Naive thymus-derived CD4-positive, alpha-beta T cell (primary cell): ENCODE measurements at regions of chr6 and their contacts with region 1.

Region 1: GRCh38 chr6:31139599-31139998 is 733 bp upstream of the PSORS1C2 start:
- DNase-seq: no peak
- ATAC-seq: no peak
- H3K4me3 ChIP-seq: no peak overlapping the region
- H3K4me3 Mint-ChIP-seq: peak overlapping the region in 1 of 10 donors; percentile 11
- H3K27ac ChIP-seq: no peak overlapping the region
- H3K27ac Mint-ChIP-seq: no peak overlapping the region
- H3K4me1 ChIP-seq: peaks cover 0 to 5% of the 10 kb centered on the region in 2 donors
- H3K4me1 Mint-ChIP-seq: peaks cover 4 to 8% (median 7%) of the 10 kb centered on the region in 7 donors
- H3K27me3 ChIP-seq: no peaks in the 10 kb centered on the region
- H3K27me3 Mint-ChIP-seq: peaks cover 0 to 3% (median 0%) of the 10 kb centered on the region in 5 donors

Region 2: GRCh38 chr6:31114970-31115849 is 24.4 kb before region 1 on chr6:
- CTCF ChIA-PET with region 1: no interaction called
- POLR2A ChIA-PET with region 1: no interaction called
- intact Hi-C with region 1: no loop called
- DNase-seq: peak in 3 of 9 donors; percentile 23 to 45 (median 23)
- ATAC-seq: no peak
- H3K4me3 ChIP-seq: no peak overlapping the region
- H3K4me3 Mint-ChIP-seq: peak overlapping the region in 2 of 10 donors; percentile 28 to 46
- H3K27ac ChIP-seq: no peak overlapping the region
- H3K27ac Mint-ChIP-seq: peak overlapping the region in 2 of 9 donors; percentile 32 to 76
- H3K4me1 ChIP-seq: no peaks in the 10 kb centered on the region
- H3K4me1 Mint-ChIP-seq: peaks cover 0 to 12% (median 5%) of the 10 kb centered on the region in 7 donors
- H3K27me3 ChIP-seq: no peaks in the 10 kb centered on the region
- H3K27me3 Mint-ChIP-seq: peaks cover 0 to 24% (median 9%) of the 10 kb centered on the region in 5 donors

Region 3: GRCh38 chr6:31128093-31128676 is 11.4 kb before region 1 on chr6:
- CTCF ChIA-PET with region 1: interaction called, 8 read pairs
- POLR2A ChIA-PET with region 1: interaction called, 3 read pairs
- intact Hi-C with region 1: loop called in 1 of 2 experiments (anchors 1 kb)
- DNase-seq: peak; percentile 29 to 79 (median 55)
- ATAC-seq: peak; percentile 87
- H3K4me3 ChIP-seq: no peak overlapping the region
- H3K4me3 Mint-ChIP-seq: no peak overlapping the region
- H3K27ac ChIP-seq: no peak overlapping the region
- H3K27ac Mint-ChIP-seq: peak overlapping the region in 2 of 9 donors; percentile 0 to 1
- H3K4me1 ChIP-seq: no peaks in the 10 kb centered on the region
- H3K4me1 Mint-ChIP-seq: peaks cover 5 to 8% (median 6%) of the 10 kb centered on the region in 7 donors
- H3K27me3 ChIP-seq: no peaks in the 10 kb centered on the region
- H3K27me3 Mint-ChIP-seq: peaks cover 0 to 17% (median 5%) of the 10 kb centered on the region in 5 donors

Region 4: DNA sequence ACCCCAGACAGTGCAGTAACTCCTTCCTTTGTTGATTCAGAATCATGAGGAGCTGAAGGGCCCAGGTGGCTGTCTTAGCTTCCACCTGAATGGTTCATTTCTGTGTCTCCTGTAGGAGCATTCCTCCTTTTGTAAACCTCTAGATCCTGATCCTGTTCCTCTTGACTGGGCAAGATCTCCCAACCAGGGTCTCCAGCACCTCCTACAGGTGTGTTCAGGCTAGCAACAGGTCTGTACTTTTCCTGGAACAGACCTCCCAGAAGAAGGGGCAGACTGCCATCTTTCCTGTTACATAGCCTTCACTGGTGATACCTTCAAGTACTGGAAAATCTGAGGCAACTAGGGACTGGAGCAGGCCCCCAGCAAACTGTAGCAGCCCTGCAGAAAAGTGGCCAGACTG is 182.2 kb after region 1 on chr6:
- CTCF ChIA-PET with region 1: no interaction called
- POLR2A ChIA-PET with region 1: no interaction called
- intact Hi-C with region 1: loop called in 1 of 2 experiments (anchors 2 kb)
- DNase-seq: no peak
- ATAC-seq: no peak
- H3K4me3 ChIP-seq: no peak overlapping the region
- H3K4me3 Mint-ChIP-seq: no peak overlapping the region
- H3K27ac ChIP-seq: no peak overlapping the region
- H3K27ac Mint-ChIP-seq: peak overlapping the region in 1 of 9 donors; percentile 37
- H3K4me1 ChIP-seq: no peaks in the 10 kb centered on the region
- H3K4me1 Mint-ChIP-seq: no peaks in the 10 kb centered on the region
- H3K27me3 ChIP-seq: no peaks in the 10 kb centered on the region
- H3K27me3 Mint-ChIP-seq: peaks cover 5 to 61% (median 38%) of the 10 kb centered on the region in 5 donors

Region 5: DNA sequence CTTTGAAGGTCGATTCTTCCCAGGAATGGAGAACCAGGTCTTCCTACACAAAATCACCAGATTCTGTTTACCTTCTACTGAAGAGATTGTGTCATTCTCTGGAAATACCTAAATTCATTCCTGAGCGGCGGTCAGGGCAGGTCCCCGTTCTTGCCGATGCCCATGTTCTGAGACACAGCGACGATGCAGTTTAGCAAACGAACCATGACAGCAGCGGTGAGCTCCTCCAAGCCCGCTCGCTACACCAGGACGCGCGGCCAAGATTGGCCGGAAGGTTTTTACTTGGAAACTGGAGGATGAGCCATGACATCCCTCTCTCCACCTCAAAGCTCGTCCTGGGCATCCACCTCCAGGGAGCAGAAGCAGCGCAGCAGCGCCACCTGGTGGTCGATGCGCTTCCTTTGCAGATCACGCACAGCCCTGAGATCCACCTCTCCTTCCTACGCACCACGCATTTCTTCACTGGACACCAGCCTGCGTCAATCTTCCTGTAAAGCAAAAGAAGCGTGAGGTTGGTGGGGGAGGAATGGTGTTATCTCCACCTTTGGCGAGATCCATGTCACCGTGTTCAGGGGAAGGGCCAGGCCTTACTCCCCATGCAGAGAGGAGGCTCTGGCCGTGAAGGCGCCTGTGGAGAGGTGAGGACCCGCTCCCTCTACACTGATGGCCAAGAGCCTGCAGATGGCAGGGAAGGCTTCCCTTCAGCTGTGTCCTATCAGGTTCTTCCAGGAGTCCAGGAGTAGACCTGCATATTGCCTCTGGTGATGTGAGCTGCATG is 227.3 kb after region 1 on chr6:
- CTCF ChIA-PET with region 1: interaction called, 26 read pairs
- POLR2A ChIA-PET with region 1: interaction called, 28 read pairs
- intact Hi-C with region 1: loop called (anchors 1 kb)
- DNase-seq: peak; percentile 78 to 94 (median 86)
- ATAC-seq: peak; percentile 99
- H3K4me3 ChIP-seq: peak overlapping the region; percentile 58
- H3K4me3 Mint-ChIP-seq: peak overlapping the region; percentile 80 to 92 (median 84)
- H3K27ac ChIP-seq: peak overlapping the region; percentile 41
- H3K27ac Mint-ChIP-seq: peak overlapping the region; percentile 40 to 92 (median 79)
- H3K4me1 ChIP-seq: peaks cover 0 to 4% of the 10 kb centered on the region in 2 donors
- H3K4me1 Mint-ChIP-seq: peaks cover 3 to 32% (median 17%) of the 10 kb centered on the region in 7 donors
- H3K27me3 ChIP-seq: no peaks in the 10 kb centered on the region
- H3K27me3 Mint-ChIP-seq: peaks cover 0 to 77% (median 19%) of the 10 kb centered on the region in 5 donors

Region 6: GRCh38 chr6:31378062-31378720 is 238.6 kb after region 1 on chr6:
- CTCF ChIA-PET with region 1: interaction called, 7 read pairs
- POLR2A ChIA-PET with region 1: no interaction called
- intact Hi-C with region 1: loop called in 1 of 2 experiments (anchors 1 kb)
- DNase-seq: no peak
- ATAC-seq: no peak
- H3K4me3 ChIP-seq: no peak overlapping the region
- H3K4me3 Mint-ChIP-seq: no peak overlapping the region
- H3K27ac ChIP-seq: no peak overlapping the region
- H3K27ac Mint-ChIP-seq: peak overlapping the region in 1 of 9 donors; percentile 9
- H3K4me1 ChIP-seq: no peaks in the 10 kb centered on the region
- H3K4me1 Mint-ChIP-seq: peaks cover 0 to 3% (median 0%) of the 10 kb centered on the region in 7 donors
- H3K27me3 ChIP-seq: peaks cover 0 to 3% of the 10 kb centered on the region in 2 donors
- H3K27me3 Mint-ChIP-seq: peaks cover 14 to 40% (median 21%) of the 10 kb centered on the region in 5 donors

Region 7: GRCh38 chr6:31441365-31442267 is 302.0 kb after region 1 on chr6:
- CTCF ChIA-PET with region 1: no interaction called
- POLR2A ChIA-PET with region 1: no interaction called
- intact Hi-C with region 1: loop called in 1 of 2 experiments (anchors 2 kb)
- DNase-seq: peak; percentile 69 to 85 (median 75)
- ATAC-seq: peak; percentile 98
- H3K4me3 ChIP-seq: no peak overlapping the region
- H3K4me3 Mint-ChIP-seq: peak overlapping the region in 2 of 10 donors; percentile 13 to 32
- H3K27ac ChIP-seq: no peak overlapping the region
- H3K27ac Mint-ChIP-seq: no peak overlapping the region
- H3K4me1 ChIP-seq: no peaks in the 10 kb centered on the region
- H3K4me1 Mint-ChIP-seq: peaks cover 0 to 6% (median 4%) of the 10 kb centered on the region in 7 donors
- H3K27me3 ChIP-seq: no peaks in the 10 kb centered on the region
- H3K27me3 Mint-ChIP-seq: peaks cover 28 to 74% (median 49%) of the 10 kb centered on the region in 5 donors

Region 8: DNA sequence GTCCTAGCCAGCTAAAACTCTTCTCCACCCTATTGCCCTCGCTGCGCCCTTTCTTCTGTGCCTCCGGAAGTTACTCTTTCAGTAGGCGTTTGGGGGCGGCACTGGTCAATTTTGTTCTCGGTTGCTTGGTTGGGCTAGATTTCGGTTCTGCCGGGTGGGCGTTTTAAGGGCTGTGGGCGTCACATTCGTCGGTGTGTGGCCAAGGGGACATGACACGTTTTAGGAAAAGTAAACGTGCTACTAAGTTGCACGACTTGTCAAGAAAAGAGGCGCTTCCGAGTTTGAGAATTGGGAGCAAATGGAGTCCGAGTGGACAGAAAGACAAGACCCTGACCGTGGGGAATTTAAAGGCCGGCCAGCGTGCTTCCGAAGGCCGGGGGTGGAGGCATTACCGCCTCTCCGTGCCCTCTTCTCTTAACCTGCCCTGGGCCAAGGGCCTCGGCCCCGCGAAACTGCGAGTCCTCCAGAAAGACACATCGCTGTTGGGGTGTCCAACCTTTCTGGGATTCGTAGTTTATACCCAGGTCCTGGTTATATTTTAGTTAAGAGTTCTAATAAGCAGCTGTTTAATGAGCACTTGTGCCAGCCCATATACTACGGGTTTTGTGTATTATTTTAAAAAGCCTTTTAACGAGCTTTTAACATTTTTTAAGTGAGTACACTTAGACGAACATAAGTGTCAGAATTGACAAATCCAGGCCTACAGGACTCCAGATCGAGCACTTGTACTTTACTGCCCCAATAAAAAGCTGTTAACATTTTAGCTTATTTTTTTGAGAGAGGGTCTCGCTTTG is 513.5 kb after region 1 on chr6:
- CTCF ChIA-PET with region 1: no interaction called
- POLR2A ChIA-PET with region 1: no interaction called
- intact Hi-C with region 1: no loop called
- DNase-seq: peak in 2 of 9 donors; percentile 81 to 89
- ATAC-seq: peak; percentile 77
- H3K4me3 ChIP-seq: peak overlapping the region; percentile 66
- H3K4me3 Mint-ChIP-seq: peak overlapping the region; percentile 96 to 100 (median 99)
- H3K27ac ChIP-seq: peak overlapping the region; percentile 95
- H3K27ac Mint-ChIP-seq: peak overlapping the region; percentile 99 to 100 (median 100)
- H3K4me1 ChIP-seq: peaks cover 23 to 30% of the 10 kb centered on the region in 2 donors
- H3K4me1 Mint-ChIP-seq: peaks cover 39 to 71% (median 63%) of the 10 kb centered on the region in 7 donors
- H3K27me3 ChIP-seq: no peaks in the 10 kb centered on the region
- H3K27me3 Mint-ChIP-seq: no peaks in the 10 kb centered on the region